ENCODE measurements at regions of chr7 and their contacts with region 1.

Region 1: GRCh38 chr7:47945261-47946001 is 2.8 kb downstream of the PKD1L1 start:
- DNase-seq: peak; percentile 59
- CTCF ChIP-seq: peak; percentile 86

Region 2: GRCh38 chr7:47932016-47932415 is 13.4 kb before region 1 on chr7:
- CTCF ChIA-PET with region 1: interaction called, 24 read pairs
- POLR2A ChIA-PET with region 1: no interaction called
- DNase-seq: no peak
- CTCF ChIP-seq: no peak

Region 3: DNA sequence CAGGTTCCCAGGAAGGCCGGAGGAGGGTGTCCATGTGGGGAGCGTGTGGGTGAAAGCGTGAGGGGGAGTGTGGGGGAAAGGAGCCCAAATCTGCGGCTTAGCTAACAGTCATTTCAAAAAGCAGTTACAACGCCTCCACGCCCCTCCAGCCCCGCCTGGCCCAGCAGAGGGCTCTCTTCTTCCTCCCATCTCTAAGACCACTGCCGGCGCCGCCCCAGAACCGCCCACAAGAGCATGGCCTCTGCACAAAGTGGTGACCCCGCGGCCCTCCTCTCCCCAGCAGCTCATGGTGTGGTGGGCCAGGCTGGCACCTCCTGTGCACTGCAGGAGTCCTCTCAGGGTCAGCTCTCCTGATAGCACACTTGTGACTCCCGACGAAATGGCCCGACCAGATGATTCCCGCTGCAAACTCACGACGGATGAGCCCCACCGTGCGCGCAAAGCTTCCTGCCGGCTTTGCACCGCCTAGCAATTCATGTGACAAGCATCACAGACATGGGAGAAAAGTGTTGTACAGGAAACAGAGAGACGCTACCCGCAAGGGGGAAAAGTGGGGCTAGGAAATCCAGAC is 46.4 kb after region 1 on chr7:
- CTCF ChIA-PET with region 1: interaction called, 16 read pairs
- POLR2A ChIA-PET with region 1: no interaction called
- DNase-seq: peak; percentile 92
- CTCF ChIP-seq: peak; percentile 80

Region 4: GRCh38 chr7:48094751-48095562 is 149.5 kb after region 1 on chr7:
- CTCF ChIA-PET with region 1: interaction called, 12 read pairs
- POLR2A ChIA-PET with region 1: no interaction called
- DNase-seq: no peak
- CTCF ChIP-seq: no peak

Region 5: GRCh38 chr7:48118041-48118440 is 172.6 kb after region 1 on chr7:
- CTCF ChIA-PET with region 1: interaction called, 17 read pairs
- POLR2A ChIA-PET with region 1: no interaction called
- DNase-seq: no peak
- CTCF ChIP-seq: no peak

Region 6: DNA sequence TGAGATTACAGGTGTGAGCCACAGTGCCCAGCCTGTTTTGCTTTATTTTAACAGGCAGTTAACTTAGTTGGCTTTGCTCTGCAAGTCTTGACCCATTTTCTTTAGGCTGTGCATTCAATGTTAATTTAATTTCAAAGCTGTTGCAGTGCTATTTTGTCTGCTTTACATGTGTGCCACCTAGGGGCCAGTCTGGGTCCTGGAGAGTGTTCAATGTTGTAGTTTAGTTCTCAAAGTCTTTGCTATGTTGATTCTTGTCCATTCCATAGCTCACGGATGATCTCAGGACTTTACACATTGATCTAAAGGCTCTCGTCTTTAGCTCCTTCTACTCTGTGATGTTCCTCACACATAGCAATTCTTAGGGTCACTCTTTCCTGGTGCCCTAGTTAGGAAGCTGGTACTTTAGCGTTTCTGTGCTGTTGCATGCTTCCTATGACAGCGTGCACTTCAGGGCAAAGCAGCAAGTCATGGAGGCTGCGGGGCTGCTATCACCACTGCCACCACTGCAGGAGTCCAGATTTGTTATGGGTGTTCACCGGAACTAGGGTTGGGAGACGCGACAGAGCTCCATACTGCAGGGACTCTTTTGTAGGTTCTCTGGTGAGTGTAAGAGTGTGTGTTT is 209.5 kb after region 1 on chr7:
- CTCF ChIA-PET with region 1: interaction called, 24 read pairs
- POLR2A ChIA-PET with region 1: no interaction called
- DNase-seq: peak; percentile 29
- CTCF ChIP-seq: peak; percentile 51

Measured in GM10248 (cell line).